Common myeloid progenitor, CD34-positive (primary cell): ENCODE measurements at regions of chr11 and their contacts with region 1.

Region 1: GRCh38 chr11:65204646-65205601 is 23.2 kb downstream of the CAPN1 start:
- DNase-seq: peak; percentile 56 to 65 (median 59)
- H3K4me3 ChIP-seq: no peak overlapping the region
- H3K27ac ChIP-seq: no peak overlapping the region
- H3K4me1 ChIP-seq: peaks cover 0 to 10% (median 4%) of the 10 kb centered on the region in 4 experiments
- H3K27me3 ChIP-seq: no peaks in the 10 kb centered on the region

Region 2: GRCh38 chr11:64608046-64608445 is 596.9 kb before region 1 on chr11:
- CTCF ChIA-PET with region 1: no interaction called
- POLR2A ChIA-PET with region 1: no interaction called
- DNase-seq: no peak
- H3K4me3 ChIP-seq: no peak overlapping the region
- H3K27ac ChIP-seq: no peak overlapping the region
- H3K4me1 ChIP-seq: peaks cover 0 to 46% (median 27%) of the 10 kb centered on the region in 4 experiments
- H3K27me3 ChIP-seq: no peaks in the 10 kb centered on the region

Region 3: DNA sequence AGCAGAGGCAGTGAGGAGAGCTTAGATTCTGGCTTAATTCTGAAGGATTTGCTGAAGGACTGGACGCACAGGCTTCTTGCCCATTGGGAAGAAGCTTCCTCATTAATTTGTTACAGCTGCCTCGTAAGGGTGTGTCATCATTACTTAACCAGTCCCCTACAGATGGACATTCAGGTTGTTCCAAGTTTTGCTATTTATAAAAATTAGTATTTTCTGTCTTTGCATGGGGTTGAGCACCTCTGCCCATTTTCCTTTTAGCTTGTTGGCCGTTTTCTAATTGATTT is 14.9 kb after region 1 on chr11:
- CTCF ChIA-PET with region 1: interaction called, 25 read pairs
- POLR2A ChIA-PET with region 1: no interaction called
- DNase-seq: no peak
- H3K4me3 ChIP-seq: no peak overlapping the region
- H3K27ac ChIP-seq: no peak overlapping the region
- H3K4me1 ChIP-seq: peaks cover 5 to 66% (median 32%) of the 10 kb centered on the region in 4 experiments
- H3K27me3 ChIP-seq: no peaks in the 10 kb centered on the region

Region 4: GRCh38 chr11:65251476-65251875 is 46.6 kb after region 1 on chr11:
- CTCF ChIA-PET with region 1: interaction called, 151 read pairs
- POLR2A ChIA-PET with region 1: interaction called, 4 read pairs
- DNase-seq: no peak
- H3K4me3 ChIP-seq: no peak overlapping the region
- H3K27ac ChIP-seq: no peak overlapping the region
- H3K4me1 ChIP-seq: no peaks in the 10 kb centered on the region
- H3K27me3 ChIP-seq: no peaks in the 10 kb centered on the region